HAP-1 (cell line): ENCODE measurements at regions of chrX and their contacts with region 1.

Region 1: GRCh38 chrX:123648028-123648810 is 84.6 kb downstream of the THOC2 start:
- DNase-seq: peak; percentile 24 to 70
- H3K4me3 ChIP-seq: no peak overlapping the region
- H3K4me1 ChIP-seq: peaks cover 12% of the 10 kb centered on the region
- H3K27me3 ChIP-seq: no peaks in the 10 kb centered on the region

Region 2: GRCh38 chrX:123450221-123450620 is 198.0 kb before region 1 on chrX:
- in situ Hi-C with region 1: loop called (anchors 25 kb)
- DNase-seq: peak; percentile 18 to 42
- H3K4me3 ChIP-seq: no peak overlapping the region
- H3K4me1 ChIP-seq: peaks cover 4% of the 10 kb centered on the region; the same call in 1 of the 2 replicates
- H3K27me3 ChIP-seq: no peaks in the 10 kb centered on the region

Region 3: GRCh38 chrX:124333862-124334261 is 685.6 kb after region 1 on chrX:
- in situ Hi-C with region 1: no loop called
- DNase-seq: no peak
- H3K4me3 ChIP-seq: no peak overlapping the region
- H3K4me1 ChIP-seq: no peaks in the 10 kb centered on the region
- H3K27me3 ChIP-seq: no peaks in the 10 kb centered on the region